ENCODE measurements at regions of chr13 and their contacts with region 1.

Region 1: GRCh38 chr13:20704446-20705069 is 1.1 kb downstream of the IL17D start:
- DNase-seq: no peak
- ATAC-seq: no peak
- H3K4me3 ChIP-seq: no peak overlapping the region
- H3K27ac ChIP-seq: peak overlapping the region in 3 of 4 donors; percentile 39 to 60 (median 51)
- H3K4me1 ChIP-seq: peaks cover 20% of the 10 kb centered on the region
- H3K27me3 ChIP-seq: no peaks in the 10 kb centered on the region
- CTCF ChIP-seq: no peak
- POLR2A ChIP-seq: no peak

Region 2: DNA sequence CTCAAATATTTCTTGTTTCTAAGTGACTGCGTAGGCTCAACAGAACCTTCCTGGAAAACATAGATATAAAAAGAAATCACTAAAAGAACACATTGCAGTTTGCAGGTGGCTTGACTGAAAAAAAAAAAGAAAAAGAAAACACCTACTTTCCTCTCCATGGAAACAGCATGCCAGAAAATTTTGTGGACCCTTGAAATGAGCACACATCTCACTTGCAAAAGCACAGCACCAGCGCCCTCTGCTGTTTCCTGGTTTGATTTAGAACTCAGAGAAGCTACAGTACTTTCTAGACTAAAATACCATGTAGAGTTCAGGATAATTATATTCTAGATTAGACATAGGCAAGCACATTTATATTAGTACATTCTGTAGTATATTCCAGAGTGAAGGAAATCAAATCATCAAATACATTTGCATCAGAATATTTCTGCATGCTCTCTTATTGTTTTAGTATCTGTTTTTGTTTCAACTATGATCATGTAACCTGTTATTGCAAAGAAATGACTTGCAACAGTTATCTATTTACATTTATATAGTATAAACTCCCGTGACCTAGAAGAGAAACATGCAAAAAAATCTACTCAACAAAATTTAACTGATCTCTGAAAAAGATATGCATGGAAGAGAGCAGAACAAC is 220.3 kb after region 1 on chr13:
- intact Hi-C with region 1: loop called (anchors 5 kb)
- DNase-seq: peak; percentile 70 to 86 (median 80)
- ATAC-seq: peak; percentile 47
- H3K4me3 ChIP-seq: no peak overlapping the region
- H3K27ac ChIP-seq: no peak overlapping the region
- H3K4me1 ChIP-seq: no peaks in the 10 kb centered on the region
- H3K27me3 ChIP-seq: no peaks in the 10 kb centered on the region
- CTCF ChIP-seq: peak; percentile 57 to 71 (median 68)
- POLR2A ChIP-seq: no peak

Measured in body of pancreas (tissue), 4 donors.